ENCODE measurements at regions of chr3 and their contacts with region 1.

Region 1: DNA sequence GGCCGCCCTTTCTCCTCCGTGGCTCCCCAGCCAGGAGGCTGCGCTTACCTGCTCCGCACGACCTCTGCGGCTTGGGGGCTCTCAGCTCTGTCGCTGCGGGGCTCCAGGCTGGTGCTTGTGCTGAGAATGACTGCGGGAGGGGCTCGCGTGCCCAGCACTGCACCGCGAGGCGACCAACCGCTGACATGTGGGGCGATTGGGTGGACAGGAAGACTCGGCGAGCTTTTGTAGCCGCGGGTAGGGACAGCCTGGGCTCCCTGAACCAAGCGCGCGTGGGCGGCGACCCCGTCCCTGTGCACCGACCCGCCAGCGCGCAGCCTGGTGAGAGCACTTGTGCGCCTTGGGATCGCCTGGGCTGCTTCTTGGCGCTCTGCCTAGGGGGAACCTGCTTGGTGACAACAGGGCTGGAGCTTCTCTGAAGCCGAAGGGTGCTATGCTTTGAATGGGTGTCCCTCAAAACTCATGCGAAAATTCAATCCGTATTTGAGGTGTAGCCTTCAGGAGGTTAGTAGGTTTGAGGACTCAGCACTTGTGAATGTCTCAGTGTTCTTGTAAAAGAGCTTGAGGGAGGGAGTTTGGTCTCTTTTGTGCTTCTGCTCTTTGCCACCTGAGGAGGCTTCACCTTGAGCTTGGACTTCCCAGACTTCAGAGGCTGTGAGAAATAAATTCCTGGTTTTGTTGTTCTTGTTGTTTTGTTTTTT is 50.4 kb downstream of the IL12A start:
- DNase-seq: peak; percentile 24
- H3K4me3 ChIP-seq: peak overlapping the region; percentile 7 to 27
- H3K27ac ChIP-seq: no peak overlapping the region
- H3K4me1 ChIP-seq: no peaks in the 10 kb centered on the region
- H3K27me3 ChIP-seq: no peaks in the 10 kb centered on the region
- CTCF ChIP-seq: no peak
- POLR2A ChIP-seq: no peak

Region 2: DNA sequence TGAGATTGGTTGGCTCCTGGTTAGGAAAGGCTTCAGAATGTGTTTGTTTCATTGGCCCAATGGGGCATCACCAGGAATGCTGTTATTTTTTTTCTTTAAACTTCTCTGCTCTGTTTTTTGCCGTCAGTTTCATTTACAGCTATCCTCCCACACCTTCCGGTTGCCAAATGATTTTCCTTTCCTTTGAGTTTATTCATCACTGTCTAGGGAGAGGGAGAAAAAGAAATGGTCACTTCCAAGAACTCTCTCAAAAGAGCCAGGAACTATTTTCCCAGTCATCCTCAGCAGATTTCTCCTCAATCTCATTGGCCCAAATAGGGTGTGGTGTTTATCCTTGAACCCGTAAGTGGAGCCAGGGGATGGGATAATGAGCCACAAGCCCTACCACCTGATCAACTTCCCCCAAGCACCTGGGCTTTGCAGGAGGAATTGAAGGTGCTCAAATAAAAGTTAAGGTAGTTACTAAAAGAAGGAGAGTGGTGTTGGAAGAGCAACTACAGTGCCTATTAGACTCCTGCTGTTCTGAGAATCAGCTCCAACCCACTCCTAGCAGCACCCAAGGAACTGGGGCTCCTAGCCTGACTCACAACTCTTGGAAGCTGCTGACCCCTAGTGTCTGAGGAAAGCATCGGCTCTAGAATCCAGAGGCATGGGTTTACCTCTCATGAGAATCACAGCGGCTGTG is 234.1 kb before region 1 on chr3:
- intact Hi-C with region 1: no loop called
- DNase-seq: peak; percentile 64
- H3K4me3 ChIP-seq: no peak overlapping the region
- H3K27ac ChIP-seq: no peak overlapping the region
- H3K4me1 ChIP-seq: no peaks in the 10 kb centered on the region
- H3K27me3 ChIP-seq: no peaks in the 10 kb centered on the region
- CTCF ChIP-seq: peak; percentile 56 to 88 (median 76)
- POLR2A ChIP-seq: no peak

Region 3: GRCh38 chr3:160001850-160002623 is 37.0 kb before region 1 on chr3:
- intact Hi-C with region 1: no loop called
- DNase-seq: peak; percentile 87
- H3K4me3 ChIP-seq: no peak overlapping the region
- H3K27ac ChIP-seq: no peak overlapping the region
- H3K4me1 ChIP-seq: no peaks in the 10 kb centered on the region
- H3K27me3 ChIP-seq: no peaks in the 10 kb centered on the region
- CTCF ChIP-seq: no peak
- POLR2A ChIP-seq: no peak

Region 4: DNA sequence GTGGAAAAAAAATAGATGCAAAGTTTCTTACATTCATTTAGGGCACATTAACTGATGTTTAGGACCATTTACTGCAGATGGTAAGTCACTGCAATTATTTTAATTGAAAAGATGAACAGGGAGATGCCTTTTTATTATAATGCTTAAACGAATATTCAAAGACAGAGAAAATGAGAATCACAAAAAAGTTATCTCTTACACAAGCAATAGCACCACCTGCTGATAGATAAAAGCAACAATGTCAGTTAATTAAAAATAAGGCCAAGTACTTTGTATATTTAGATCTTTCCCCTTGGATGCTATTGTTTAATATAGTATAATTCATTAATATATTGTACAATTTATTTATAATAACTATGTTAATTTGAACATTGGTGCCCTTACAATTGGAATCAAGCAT is 304.1 kb after region 1 on chr3:
- intact Hi-C with region 1: loop called (anchors 10 kb)
- DNase-seq: no peak
- H3K4me3 ChIP-seq: no peak overlapping the region
- H3K27ac ChIP-seq: no peak overlapping the region
- H3K4me1 ChIP-seq: no peaks in the 10 kb centered on the region
- H3K27me3 ChIP-seq: no peaks in the 10 kb centered on the region
- CTCF ChIP-seq: peak in 3 of 4 experiments; percentile 37 to 49 (median 41)
- POLR2A ChIP-seq: no peak